ENCODE measurements at regions of chr1 and their contacts with region 1.

Region 1: DNA sequence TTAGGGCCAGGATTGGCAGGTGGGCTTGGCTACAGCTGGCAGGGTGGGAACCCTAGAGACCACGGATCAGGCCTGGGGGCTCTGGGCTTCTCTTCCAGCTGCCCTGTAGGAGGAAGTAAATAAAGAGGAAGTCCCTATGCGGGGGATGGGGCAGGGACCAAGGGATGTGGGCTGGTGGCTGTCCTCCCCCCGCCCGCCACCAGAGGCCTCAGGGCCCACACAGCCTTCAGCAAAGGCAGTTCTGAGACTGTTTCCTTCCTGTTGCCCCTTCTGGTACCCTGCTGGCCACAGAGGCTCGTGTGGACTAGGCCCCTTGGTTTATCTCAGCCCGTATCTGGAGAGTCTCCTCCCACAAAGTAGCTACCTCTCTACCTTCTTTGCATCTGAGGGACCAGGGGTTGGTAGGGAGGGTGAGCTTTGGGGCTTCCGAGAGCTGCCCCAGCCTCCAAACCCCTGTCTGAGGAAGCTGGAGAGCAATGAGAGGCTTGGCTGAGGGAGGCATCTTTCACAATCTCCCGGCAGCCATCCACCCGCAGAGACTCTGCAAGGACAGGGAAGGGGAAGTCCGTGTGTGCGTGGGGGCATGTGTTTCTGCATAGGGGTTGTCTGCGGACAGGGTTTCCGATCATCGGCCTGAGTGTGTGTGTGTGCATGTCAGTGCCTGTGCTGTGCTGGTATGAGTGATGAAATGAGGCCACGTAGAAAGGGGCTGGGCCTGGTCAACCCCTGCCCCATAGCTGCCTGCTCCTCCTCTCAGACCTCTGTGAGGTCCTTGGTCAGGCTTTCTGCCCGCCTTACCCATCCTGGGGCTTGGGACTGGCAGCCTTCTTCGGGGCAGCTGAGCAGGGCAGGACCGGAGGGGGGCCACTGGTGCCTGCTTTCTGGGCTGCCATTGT is 12.5 kb downstream of the RPS6KA1 start:
- DNase-seq: peak; percentile 47
- H3K27ac ChIP-seq: peak overlapping the region; percentile 90
- CTCF ChIP-seq: no peak

Region 2: GRCh38 chr1:26477446-26478152 is 64.5 kb before region 1 on chr1:
- CTCF ChIA-PET with region 1: no interaction called
- POLR2A ChIA-PET with region 1: no interaction called
- DNase-seq: no peak
- H3K27ac ChIP-seq: peak overlapping the region; percentile 47
- CTCF ChIP-seq: no peak

Region 3: DNA sequence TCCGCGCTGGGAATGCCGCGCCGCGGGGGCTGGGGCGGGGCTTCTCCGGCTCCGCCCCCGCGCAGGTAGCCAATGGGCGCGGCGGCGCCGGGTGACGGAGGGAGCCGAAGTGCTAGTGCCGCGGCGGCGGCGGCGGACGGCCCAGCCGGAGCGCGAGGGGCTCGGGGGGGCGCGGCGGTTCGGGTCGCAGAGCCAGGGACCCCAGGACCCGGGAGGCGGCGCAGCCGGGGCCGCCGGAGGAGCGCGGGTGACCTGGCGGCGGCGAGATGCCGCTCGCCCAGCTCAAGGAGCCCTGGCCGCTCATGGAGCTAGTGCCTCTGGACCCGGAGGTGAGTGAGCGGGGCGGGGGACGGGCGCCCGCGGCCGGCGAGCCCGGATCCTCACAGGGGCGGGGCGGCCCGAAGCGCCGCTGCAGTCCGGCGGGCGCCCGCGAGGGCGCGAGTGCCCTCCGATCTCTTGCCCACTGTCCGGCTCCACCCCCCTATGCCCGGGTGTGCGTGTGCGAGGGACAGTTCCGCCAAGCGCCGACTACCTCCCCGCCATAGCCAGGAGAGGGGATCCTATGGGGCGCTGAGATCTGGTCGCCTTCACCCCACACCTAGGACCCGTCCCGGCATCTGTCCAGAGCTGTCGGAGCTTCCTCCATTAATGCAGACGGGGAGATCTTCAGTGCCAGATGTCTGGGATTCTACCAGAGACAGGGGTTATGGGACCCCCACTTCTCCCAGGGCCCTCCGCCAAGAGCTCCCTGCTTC is 12.2 kb before region 1 on chr1 and contains the start of gene RPS6KA1:
- CTCF ChIA-PET with region 1: interaction called, 15 read pairs
- POLR2A ChIA-PET with region 1: no interaction called
- DNase-seq: peak; percentile 87
- H3K27ac ChIP-seq: peak within 1 kb of the TSS; percentile 98
- CTCF ChIP-seq: no peak

Region 4: GRCh38 chr1:26627954-26628353 is 85.9 kb after region 1 on chr1:
- CTCF ChIA-PET with region 1: no interaction called
- POLR2A ChIA-PET with region 1: no interaction called
- DNase-seq: no peak
- H3K27ac ChIP-seq: no peak overlapping the region
- CTCF ChIP-seq: no peak